ENCODE measurements at regions of chr17 and their contacts with region 1.

Region 1: DNA sequence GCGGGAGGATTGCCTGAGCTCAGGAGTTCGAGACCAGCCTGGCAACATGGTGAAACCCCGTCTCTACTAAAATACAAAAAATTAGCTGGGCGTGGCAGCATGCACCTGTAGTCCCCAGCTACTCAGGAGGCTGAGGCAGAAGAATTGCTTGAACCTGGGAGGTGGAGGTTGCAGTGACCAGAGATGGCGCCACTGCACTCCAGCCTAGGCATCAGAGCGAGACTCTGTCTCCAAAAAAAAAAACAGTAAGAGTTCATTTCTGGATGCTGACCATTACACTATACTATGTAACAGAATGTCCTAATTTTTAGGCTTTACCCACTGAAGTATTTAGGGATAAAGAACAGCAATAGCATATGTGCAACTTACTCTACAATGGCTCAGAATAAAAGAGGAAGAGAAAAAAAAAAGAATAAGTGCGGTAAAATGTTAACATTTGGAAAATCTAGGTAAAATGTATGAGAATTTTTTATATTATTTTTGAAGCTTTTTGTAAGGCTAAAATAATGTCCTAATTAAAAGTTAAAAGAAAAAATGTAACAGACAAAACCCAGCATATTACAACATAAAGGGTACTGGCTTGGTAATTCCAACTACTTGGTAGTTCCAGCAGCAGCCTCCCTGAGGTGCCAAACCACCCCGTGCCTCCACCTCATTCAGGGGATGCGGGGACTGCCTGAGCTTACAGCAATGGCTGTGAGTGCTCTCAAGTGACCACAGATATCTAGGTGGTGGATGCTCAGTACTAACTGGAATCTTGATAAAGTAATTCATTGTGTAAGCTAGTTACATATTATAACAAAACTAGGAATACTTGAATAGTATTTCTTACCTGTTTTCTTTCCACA is 10.9 kb downstream of the COPS3 start:
- DNase-seq: peak; percentile 60
- ATAC-seq: no peak
- H3K4me3 Mint-ChIP-seq: no peak overlapping the region
- H3K27ac Mint-ChIP-seq: no peak overlapping the region
- H3K4me1 Mint-ChIP-seq: no peaks in the 10 kb centered on the region
- H3K27me3 Mint-ChIP-seq: no peaks in the 10 kb centered on the region
- CTCF ChIP-seq: peak; percentile 60

Region 2: GRCh38 chr17:17258998-17259397 is 11.2 kb before region 1 on chr17:
- CTCF ChIA-PET with region 1: interaction called, 19 read pairs
- POLR2A ChIA-PET with region 1: interaction called, 4 read pairs
- intact Hi-C with region 1: no loop called
- DNase-seq: no peak
- ATAC-seq: no peak
- H3K4me3 Mint-ChIP-seq: no peak overlapping the region
- H3K27ac Mint-ChIP-seq: peak overlapping the region; percentile 25
- H3K4me1 Mint-ChIP-seq: no peaks in the 10 kb centered on the region
- H3K27me3 Mint-ChIP-seq: no peaks in the 10 kb centered on the region
- CTCF ChIP-seq: no peak

Region 3: DNA sequence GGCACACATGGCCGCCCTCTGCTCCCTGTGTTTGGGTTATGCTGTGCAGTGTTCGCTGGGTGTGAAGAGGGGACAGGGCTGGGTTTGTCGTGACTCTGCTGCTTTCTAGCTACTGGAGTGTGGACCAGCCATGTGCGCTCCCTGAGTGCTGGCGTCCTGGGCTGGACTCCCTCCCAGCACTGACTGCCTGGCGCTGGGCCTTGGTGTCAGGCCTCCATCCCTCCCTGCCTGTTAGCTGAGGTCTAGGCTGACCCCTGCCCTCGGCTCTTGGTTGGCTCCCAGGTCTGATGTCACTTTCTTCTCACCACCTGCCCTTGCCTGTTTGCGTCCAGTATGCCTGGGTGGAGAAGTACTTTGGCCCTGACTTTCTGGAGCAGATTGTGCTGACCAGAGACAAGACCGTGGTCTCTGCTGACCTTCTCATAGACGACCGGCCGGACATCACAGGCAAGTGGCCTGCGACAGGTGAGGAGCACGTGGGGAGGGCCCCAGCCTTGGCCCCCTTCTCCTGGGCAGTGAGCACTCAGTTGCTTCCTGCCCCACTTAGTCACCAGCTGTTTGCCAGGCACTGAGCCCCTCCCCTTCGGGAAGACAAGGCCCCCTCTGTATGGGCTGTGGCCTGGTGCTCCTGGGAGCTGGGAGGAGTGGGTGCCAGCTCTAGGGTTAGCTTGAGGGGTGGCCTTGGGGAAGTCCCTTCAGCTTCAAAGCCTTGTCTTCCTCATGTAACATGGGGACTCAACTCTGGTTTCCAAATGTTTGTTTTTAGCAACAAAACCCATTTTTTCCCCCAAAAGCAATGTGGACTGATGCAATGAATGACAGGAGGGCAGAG is 74.5 kb after region 1 on chr17:
- CTCF ChIA-PET with region 1: no interaction called
- POLR2A ChIA-PET with region 1: no interaction called
- intact Hi-C with region 1: no loop called
- DNase-seq: no peak
- ATAC-seq: no peak
- H3K4me3 Mint-ChIP-seq: no peak overlapping the region
- H3K27ac Mint-ChIP-seq: no peak overlapping the region
- H3K4me1 Mint-ChIP-seq: no peaks in the 10 kb centered on the region
- H3K27me3 Mint-ChIP-seq: no peaks in the 10 kb centered on the region
- CTCF ChIP-seq: no peak